ENCODE measurements at regions of chr15 and their contacts with region 1.

Region 1: DNA sequence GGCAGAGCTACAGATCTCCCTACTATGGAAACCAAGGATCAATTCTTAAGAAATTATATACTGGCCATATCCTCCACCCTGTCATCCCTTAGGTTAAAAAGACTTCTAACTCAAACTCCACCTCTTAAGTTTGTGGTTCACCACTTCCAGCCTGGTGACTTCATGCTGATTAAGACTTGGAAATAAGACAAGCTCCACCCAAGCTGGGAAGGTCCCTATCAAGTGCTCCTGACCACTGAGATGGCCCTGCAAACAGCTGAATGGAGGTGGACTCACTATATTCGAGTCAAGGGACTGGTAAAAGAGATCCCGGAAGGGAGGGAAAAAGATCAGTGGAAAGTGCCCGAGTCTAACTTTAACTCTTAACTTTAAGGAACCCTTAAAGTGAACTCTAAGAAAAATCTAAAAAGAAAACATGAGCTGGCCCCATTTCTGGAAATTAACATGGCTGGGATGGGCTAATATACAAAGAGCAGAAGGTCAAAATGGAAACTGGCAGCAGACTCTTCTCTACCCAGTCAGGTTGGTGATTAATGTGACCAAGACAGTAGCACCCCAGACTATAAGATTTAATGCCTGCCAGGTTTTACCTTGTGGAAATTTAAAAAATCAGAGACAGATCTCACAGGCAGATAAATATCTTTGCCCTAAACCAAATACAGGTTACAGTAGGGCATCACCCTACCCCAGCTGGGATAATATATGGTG is 43.9 kb downstream of the PPCDC start:
- DNase-seq: peak in 2 of 9 donors; percentile 11 to 67
- ATAC-seq: peak; percentile 64
- H3K4me3 ChIP-seq: no peak overlapping the region
- H3K4me3 Mint-ChIP-seq: peak overlapping the region in 7 of 10 donors; percentile 0 to 85 (median 36)
- H3K27ac ChIP-seq: no peak overlapping the region
- H3K27ac Mint-ChIP-seq: peak overlapping the region in 2 of 9 donors; percentile 9 to 97
- H3K4me1 ChIP-seq: peaks cover 12 to 24% of the 10 kb centered on the region in 2 donors
- H3K4me1 Mint-ChIP-seq: peaks cover 19 to 88% (median 26%) of the 10 kb centered on the region in 7 donors
- H3K27me3 ChIP-seq: no peaks in the 10 kb centered on the region
- H3K27me3 Mint-ChIP-seq: peaks cover 0 to 10% (median 4%) of the 10 kb centered on the region in 5 donors

Region 2: GRCh38 chr15:75042730-75043508 is 24.4 kb before region 1 on chr15:
- CTCF ChIA-PET with region 1: interaction called, 3 read pairs
- POLR2A ChIA-PET with region 1: no interaction called
- intact Hi-C with region 1: loop called in 1 of 2 experiments (anchors 1 kb)
- DNase-seq: peak in 3 of 9 donors; percentile 16 to 65 (median 45)
- ATAC-seq: peak; percentile 85
- H3K4me3 ChIP-seq: no peak overlapping the region
- H3K4me3 Mint-ChIP-seq: peak overlapping the region in 2 of 10 donors; percentile 48 to 79
- H3K27ac ChIP-seq: no peak overlapping the region
- H3K27ac Mint-ChIP-seq: peak overlapping the region in 2 of 9 donors; percentile 28 to 84
- H3K4me1 ChIP-seq: peaks cover 0 to 5% of the 10 kb centered on the region in 2 donors
- H3K4me1 Mint-ChIP-seq: peaks cover 0 to 86% (median 14%) of the 10 kb centered on the region in 7 donors
- H3K27me3 ChIP-seq: no peaks in the 10 kb centered on the region
- H3K27me3 Mint-ChIP-seq: no peaks in the 10 kb centered on the region

Region 3: DNA sequence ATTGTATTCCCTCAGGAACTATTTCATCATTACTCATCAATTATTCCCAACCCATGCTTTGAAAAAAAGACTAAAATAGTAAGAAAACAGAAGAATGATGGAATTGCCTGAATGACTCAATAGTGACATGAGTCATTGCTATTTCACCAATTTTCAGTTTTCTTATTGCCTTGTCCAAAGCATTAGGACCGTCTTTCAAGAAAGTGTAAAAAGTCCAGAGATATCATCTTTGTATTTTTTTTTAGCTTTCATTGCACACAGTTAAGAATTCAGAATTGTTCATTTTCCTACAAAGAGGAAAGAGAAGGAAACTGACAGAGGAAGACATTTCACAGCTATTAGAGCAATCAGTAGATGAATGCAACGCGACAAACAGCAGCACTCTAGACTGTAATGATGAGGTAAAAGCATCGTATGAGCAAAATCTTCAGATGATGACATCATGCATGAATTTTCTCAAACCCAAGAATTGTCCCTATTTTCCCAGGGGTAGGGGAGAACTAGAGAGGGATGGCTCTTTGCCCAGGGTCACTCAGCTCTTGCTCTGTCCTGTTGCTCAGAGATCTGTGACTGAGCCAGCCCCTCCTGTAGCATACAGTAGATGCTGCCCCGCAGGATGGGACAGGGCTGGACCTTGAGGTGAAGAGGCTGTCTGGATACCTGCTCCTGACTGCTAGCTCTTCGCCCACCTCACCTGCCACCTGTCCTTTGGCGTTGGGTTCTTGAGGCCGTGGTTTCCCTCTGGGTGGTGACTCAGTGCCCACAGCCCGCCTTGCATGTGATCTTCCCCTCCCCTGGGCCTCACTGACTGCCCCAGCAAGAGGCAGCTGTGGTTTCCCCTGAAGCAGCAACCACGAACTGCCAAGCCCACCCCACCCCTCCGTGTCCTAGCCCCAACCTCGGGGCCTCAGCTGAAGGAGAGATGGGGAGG is 40.9 kb after region 1 on chr15:
- CTCF ChIA-PET with region 1: no interaction called
- POLR2A ChIA-PET with region 1: no interaction called
- intact Hi-C with region 1: loop called in 1 of 2 experiments (anchors 1 kb)
- DNase-seq: peak in 2 of 9 donors; percentile 24 to 76
- ATAC-seq: peak; percentile 83
- H3K4me3 ChIP-seq: no peak overlapping the region
- H3K4me3 Mint-ChIP-seq: peak overlapping the region in 1 of 10 donors; percentile 69
- H3K27ac ChIP-seq: no peak overlapping the region
- H3K27ac Mint-ChIP-seq: peak overlapping the region in 1 of 9 donors; percentile 86
- H3K4me1 ChIP-seq: peaks cover 0 to 23% of the 10 kb centered on the region in 2 donors
- H3K4me1 Mint-ChIP-seq: peaks cover 0 to 56% (median 5%) of the 10 kb centered on the region in 7 donors
- H3K27me3 ChIP-seq: no peaks in the 10 kb centered on the region
- H3K27me3 Mint-ChIP-seq: peaks cover 6 to 31% (median 8%) of the 10 kb centered on the region in 5 donors